Ovary (tissue), 10 donors: ENCODE measurements at regions of chr18 and their contacts with region 1.

Region 1: GRCh38 chr18:54405290-54405689 is 47.6 kb downstream of the C18orf54 start:
- DNase-seq: no peak
- H3K4me3 ChIP-seq: no peak overlapping the region
- H3K27ac ChIP-seq: no peak overlapping the region
- H3K4me1 ChIP-seq: no peaks in the 10 kb centered on the region
- H3K27me3 ChIP-seq: no peaks in the 10 kb centered on the region
- CTCF ChIP-seq: no peak
- EP300 ChIP-seq: no peak
- POLR2A ChIP-seq: no peak

Region 2: DNA sequence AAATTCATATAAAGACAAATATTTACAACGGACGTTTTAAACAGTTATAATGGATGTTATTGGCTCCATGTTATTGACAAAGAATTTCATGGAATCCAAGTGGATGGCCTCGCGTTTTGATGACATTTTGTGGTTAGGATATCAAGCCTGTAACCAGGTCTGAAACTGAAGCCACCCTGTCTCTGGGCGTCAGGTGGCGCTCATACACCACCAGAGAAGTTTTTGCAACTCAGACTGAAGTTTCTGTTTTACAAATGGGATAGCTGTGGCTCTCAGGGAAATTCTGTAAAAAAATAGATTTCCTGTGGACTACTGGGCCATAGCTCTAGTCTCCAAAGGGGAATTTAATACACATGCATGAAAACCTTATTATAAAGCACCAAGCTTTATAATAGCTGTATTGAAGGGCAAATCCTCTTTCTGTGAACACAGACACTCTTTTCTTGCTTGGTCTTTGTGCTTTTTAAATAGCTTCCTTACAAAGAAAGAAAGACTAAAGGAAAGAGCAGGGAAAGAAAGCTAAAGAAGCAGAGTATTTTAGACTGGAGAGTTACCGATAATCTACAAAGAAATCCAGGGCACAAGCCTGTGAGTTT is 39.1 kb after region 1 on chr18:
- intact Hi-C with region 1: loop called in 1 of 4 experiments (anchors 2 kb)
- DNase-seq: peak in 4 of 5 donors; percentile 22 to 52 (median 36)
- H3K4me3 ChIP-seq: no peak overlapping the region
- H3K27ac ChIP-seq: no peak overlapping the region
- H3K4me1 ChIP-seq: no peaks in the 10 kb centered on the region
- H3K27me3 ChIP-seq: no peaks in the 10 kb centered on the region
- CTCF ChIP-seq: peak in 1 of 3 donors; percentile 26
- EP300 ChIP-seq: no peak
- POLR2A ChIP-seq: no peak